A673 (cell line): ENCODE measurements at regions of chr20 and their contacts with region 1.

Region 1: GRCh38 chr20:49508435-49509199 is 26.1 kb upstream of the KCNB1 start:
- DNase-seq: peak; percentile 74
- H3K4me3 ChIP-seq: no peak overlapping the region
- H3K27ac ChIP-seq: no peak overlapping the region
- H3K4me1 ChIP-seq: peaks cover 3% of the 10 kb centered on the region
- H3K27me3 ChIP-seq: peaks cover 11% of the 10 kb centered on the region
- CTCF ChIP-seq: peak; percentile 64

Region 2: GRCh38 chr20:49330544-49331239 is 177.9 kb before region 1 on chr20:
- CTCF ChIA-PET with region 1: interaction called, 15 read pairs
- POLR2A ChIA-PET with region 1: no interaction called
- intact Hi-C with region 1: no loop called
- DNase-seq: no peak
- H3K4me3 ChIP-seq: no peak overlapping the region
- H3K27ac ChIP-seq: no peak overlapping the region
- H3K4me1 ChIP-seq: no peaks in the 10 kb centered on the region
- H3K27me3 ChIP-seq: peaks cover 32% of the 10 kb centered on the region
- CTCF ChIP-seq: no peak

Region 3: DNA sequence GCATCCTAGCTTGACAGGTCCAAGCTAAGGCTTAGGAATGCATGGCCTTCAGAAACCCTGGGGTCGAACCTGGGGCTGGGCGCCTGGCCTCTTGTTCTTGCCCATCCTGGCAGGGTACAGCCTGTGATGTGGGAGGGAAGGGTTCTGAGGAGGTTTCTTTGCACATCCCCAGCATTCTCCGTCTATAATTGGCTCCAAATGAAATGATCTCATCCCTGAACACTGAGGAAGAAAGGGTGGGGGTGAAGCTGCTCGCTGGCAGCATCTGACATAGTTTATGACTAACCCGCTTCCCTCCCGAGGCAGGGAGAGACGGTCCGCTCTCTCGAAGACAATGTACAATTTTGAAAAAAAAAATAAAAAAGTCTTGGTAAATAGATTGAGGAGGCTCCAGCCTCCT is 163.6 kb before region 1 on chr20:
- CTCF ChIA-PET with region 1: interaction called, 4 read pairs
- POLR2A ChIA-PET with region 1: interaction called, 10 read pairs
- intact Hi-C with region 1: no loop called
- DNase-seq: peak; percentile 86
- H3K4me3 ChIP-seq: peak overlapping the region; percentile 9
- H3K27ac ChIP-seq: peak overlapping the region; percentile 59
- H3K4me1 ChIP-seq: peaks cover 10% of the 10 kb centered on the region
- H3K27me3 ChIP-seq: no peaks in the 10 kb centered on the region
- CTCF ChIP-seq: no peak

Region 4: GRCh38 chr20:49496553-49497397 is 11.8 kb before region 1 on chr20:
- CTCF ChIA-PET with region 1: no interaction called
- POLR2A ChIA-PET with region 1: no interaction called
- intact Hi-C with region 1: no loop called
- DNase-seq: no peak
- H3K4me3 ChIP-seq: no peak overlapping the region
- H3K27ac ChIP-seq: no peak overlapping the region
- H3K4me1 ChIP-seq: no peaks in the 10 kb centered on the region
- H3K27me3 ChIP-seq: peaks cover 21% of the 10 kb centered on the region
- CTCF ChIP-seq: no peak

Region 5: GRCh38 chr20:49964964-49965780 is 456.6 kb after region 1 on chr20:
- CTCF ChIA-PET with region 1: no interaction called
- POLR2A ChIA-PET with region 1: no interaction called
- intact Hi-C with region 1: no loop called
- DNase-seq: peak; percentile 58
- H3K4me3 ChIP-seq: no peak overlapping the region
- H3K27ac ChIP-seq: no peak overlapping the region
- H3K4me1 ChIP-seq: no peaks in the 10 kb centered on the region
- H3K27me3 ChIP-seq: no peaks in the 10 kb centered on the region
- CTCF ChIP-seq: peak; percentile 81